T-cell (primary cell): ENCODE measurements at regions of chr16 and their contacts with region 1.

Region 1: GRCh38 chr16:24771132-24771778 is 41.8 kb downstream of the TNRC6A start:
- DNase-seq: no peak
- ATAC-seq: no peak
- H3K4me3 ChIP-seq: no peak overlapping the region
- H3K4me3 Mint-ChIP-seq: no peak overlapping the region
- H3K27ac ChIP-seq: no peak overlapping the region
- H3K27ac Mint-ChIP-seq: peak overlapping the region in 1 of 2 donors; percentile 32
- H3K4me1 ChIP-seq: no peaks in the 10 kb centered on the region
- H3K4me1 Mint-ChIP-seq: peaks cover 57 to 62% (median 61%) of the 10 kb centered on the region in 3 donors
- H3K27me3 ChIP-seq: no peaks in the 10 kb centered on the region
- H3K27me3 Mint-ChIP-seq: no peaks in the 10 kb centered on the region

Region 2: GRCh38 chr16:24525970-24526559 is 245.2 kb before region 1 on chr16:
- CTCF ChIA-PET with region 1: no interaction called
- POLR2A ChIA-PET with region 1: interaction called in 1 of 2 experiments, 10 read pairs
- DNase-seq: no peak
- ATAC-seq: no peak
- H3K4me3 ChIP-seq: no peak overlapping the region
- H3K4me3 Mint-ChIP-seq: no peak overlapping the region
- H3K27ac ChIP-seq: no peak overlapping the region
- H3K27ac Mint-ChIP-seq: no peak overlapping the region
- H3K4me1 ChIP-seq: no peaks in the 10 kb centered on the region
- H3K4me1 Mint-ChIP-seq: no peaks in the 10 kb centered on the region
- H3K27me3 ChIP-seq: peaks cover 0 to 10% of the 10 kb centered on the region in 2 experiments
- H3K27me3 Mint-ChIP-seq: peaks cover 0 to 2% of the 10 kb centered on the region in 2 donors

Region 3: GRCh38 chr16:24550295-24550694 is 221.0 kb before region 1 on chr16:
- CTCF ChIA-PET with region 1: no interaction called
- POLR2A ChIA-PET with region 1: no interaction called
- DNase-seq: no peak
- ATAC-seq: no peak
- H3K4me3 ChIP-seq: no peak overlapping the region
- H3K4me3 Mint-ChIP-seq: no peak overlapping the region
- H3K27ac ChIP-seq: no peak overlapping the region
- H3K27ac Mint-ChIP-seq: no peak overlapping the region
- H3K4me1 ChIP-seq: peaks cover 0 to 11% of the 10 kb centered on the region in 2 experiments
- H3K4me1 Mint-ChIP-seq: peaks cover 42 to 62% (median 52%) of the 10 kb centered on the region in 3 donors
- H3K27me3 ChIP-seq: no peaks in the 10 kb centered on the region
- H3K27me3 Mint-ChIP-seq: no peaks in the 10 kb centered on the region

Region 4: DNA sequence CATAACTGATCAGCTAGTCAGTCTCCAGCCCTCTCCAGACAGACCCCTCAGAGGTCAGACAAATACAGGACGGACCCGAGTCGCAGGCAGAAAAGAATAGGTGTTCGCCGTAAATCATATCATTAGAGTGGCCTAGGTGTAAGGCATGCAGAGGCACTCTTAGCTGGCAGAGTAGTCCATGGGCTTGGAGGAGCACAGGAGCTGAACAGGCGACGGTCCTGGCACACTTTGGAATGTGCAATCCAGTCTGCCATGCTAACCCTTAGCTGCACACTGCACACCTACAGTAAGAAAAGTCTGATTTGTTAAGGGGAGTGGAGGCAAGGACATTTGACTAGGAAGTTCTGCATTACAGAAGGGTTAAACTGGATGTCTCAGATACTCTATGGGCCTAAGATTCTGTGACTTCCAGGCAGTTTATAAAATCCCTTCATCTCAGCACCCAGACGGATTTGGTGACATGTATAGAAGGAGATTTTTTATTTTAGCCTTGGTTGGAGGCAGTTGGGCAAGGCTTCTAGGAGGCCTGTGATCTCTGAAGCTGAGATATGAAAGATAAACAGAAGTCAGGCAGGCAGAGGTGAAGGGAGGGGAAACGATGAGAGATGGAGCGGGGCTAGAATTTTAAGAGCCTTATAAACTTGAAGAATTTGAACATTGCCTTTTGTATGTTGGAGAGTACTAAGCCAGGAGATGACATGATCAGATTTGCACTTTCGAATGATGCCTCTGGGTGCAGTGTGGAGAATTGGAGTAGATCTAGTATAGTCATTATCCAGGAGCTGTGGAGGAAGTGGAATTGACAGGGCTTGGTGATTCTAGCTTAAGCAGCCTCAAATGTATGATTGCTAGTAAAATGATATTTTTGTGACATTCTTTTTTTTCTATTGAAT is 39.9 kb after region 1 on chr16:
- CTCF ChIA-PET with region 1: no interaction called
- POLR2A ChIA-PET with region 1: interaction called in 1 of 2 experiments, 15 read pairs
- DNase-seq: no peak
- ATAC-seq: no peak
- H3K4me3 ChIP-seq: no peak overlapping the region
- H3K4me3 Mint-ChIP-seq: no peak overlapping the region
- H3K27ac ChIP-seq: no peak overlapping the region
- H3K27ac Mint-ChIP-seq: no peak overlapping the region
- H3K4me1 ChIP-seq: no peaks in the 10 kb centered on the region
- H3K4me1 Mint-ChIP-seq: no peaks in the 10 kb centered on the region
- H3K27me3 ChIP-seq: no peaks in the 10 kb centered on the region
- H3K27me3 Mint-ChIP-seq: no peaks in the 10 kb centered on the region